Activated CD8-positive, alpha-beta T cell treated with anti-CD3 and anti-CD28 coated beads for 36 hours (primary cell): ENCODE measurements at regions of chr15 and their contacts with region 1.

Region 1: GRCh38 chr15:43824302-43825246 is at the start of gene MFAP1:
- DNase-seq: peak; percentile 95
- ATAC-seq: peak; percentile 84
- H3K4me3 Mint-ChIP-seq: peak within 1 kb of the TSS; percentile 94
- H3K27ac Mint-ChIP-seq: peak within 1 kb of the TSS; percentile 99
- H3K4me1 Mint-ChIP-seq: peaks cover 49% of the 10 kb centered on the region
- H3K27me3 Mint-ChIP-seq: no peaks in the 10 kb centered on the region
- CTCF ChIP-seq: no peak
- total RNA-seq, gene MFAP1: 39.8 to 43.1 TPM

Region 2: DNA sequence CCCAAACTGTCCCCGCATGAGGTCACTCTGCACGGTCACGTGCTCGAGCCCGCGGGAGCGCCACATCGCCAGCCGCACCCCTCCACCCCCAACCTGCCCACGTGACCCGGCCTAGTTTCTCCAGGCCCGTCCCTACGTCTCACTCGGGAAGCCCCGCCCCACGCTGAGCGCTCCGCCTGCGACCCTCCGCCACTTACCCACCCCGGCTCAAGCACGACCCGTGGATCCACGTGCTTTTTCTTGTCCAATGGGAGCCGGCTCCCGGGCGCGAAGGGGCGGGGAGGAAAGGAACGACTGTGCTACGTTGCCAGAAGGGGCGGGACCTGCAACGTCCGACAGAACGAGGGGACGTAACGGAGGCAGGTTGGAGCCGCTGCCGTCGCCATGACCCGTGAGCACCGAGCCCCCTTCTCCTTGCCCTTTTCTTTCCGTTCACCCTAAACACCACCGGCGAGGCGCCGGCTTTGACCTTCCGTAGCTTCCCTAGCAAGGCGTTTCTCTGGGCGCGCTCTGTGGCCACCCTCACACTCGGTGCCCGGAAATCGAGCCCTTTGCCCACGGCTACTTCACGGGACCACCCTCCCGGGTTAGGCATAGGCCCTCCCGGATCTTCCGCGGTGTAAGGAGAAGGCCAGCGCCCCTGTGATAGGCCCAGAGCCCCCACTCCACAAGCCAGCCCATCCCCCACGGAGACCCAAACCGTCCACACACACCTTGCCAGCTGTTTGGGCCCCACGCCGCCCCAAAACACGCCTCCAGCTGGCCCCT is 32.4 kb before region 1 on chr15 and contains the start of gene SERF2:
- CTCF ChIA-PET with region 1: interaction called, 3 read pairs
- POLR2A ChIA-PET with region 1: interaction called, 16 read pairs
- intact Hi-C with region 1: no loop called
- DNase-seq: peak; percentile 100
- ATAC-seq: peak; percentile 97
- H3K4me3 Mint-ChIP-seq: peak within 1 kb of the TSS; percentile 98
- H3K27ac Mint-ChIP-seq: peak within 1 kb of the TSS; percentile 98
- H3K4me1 Mint-ChIP-seq: peaks cover 43% of the 10 kb centered on the region
- H3K27me3 Mint-ChIP-seq: no peaks in the 10 kb centered on the region
- CTCF ChIP-seq: no peak
- total RNA-seq, gene SERF2: 775 to 810 TPM

Region 3: DNA sequence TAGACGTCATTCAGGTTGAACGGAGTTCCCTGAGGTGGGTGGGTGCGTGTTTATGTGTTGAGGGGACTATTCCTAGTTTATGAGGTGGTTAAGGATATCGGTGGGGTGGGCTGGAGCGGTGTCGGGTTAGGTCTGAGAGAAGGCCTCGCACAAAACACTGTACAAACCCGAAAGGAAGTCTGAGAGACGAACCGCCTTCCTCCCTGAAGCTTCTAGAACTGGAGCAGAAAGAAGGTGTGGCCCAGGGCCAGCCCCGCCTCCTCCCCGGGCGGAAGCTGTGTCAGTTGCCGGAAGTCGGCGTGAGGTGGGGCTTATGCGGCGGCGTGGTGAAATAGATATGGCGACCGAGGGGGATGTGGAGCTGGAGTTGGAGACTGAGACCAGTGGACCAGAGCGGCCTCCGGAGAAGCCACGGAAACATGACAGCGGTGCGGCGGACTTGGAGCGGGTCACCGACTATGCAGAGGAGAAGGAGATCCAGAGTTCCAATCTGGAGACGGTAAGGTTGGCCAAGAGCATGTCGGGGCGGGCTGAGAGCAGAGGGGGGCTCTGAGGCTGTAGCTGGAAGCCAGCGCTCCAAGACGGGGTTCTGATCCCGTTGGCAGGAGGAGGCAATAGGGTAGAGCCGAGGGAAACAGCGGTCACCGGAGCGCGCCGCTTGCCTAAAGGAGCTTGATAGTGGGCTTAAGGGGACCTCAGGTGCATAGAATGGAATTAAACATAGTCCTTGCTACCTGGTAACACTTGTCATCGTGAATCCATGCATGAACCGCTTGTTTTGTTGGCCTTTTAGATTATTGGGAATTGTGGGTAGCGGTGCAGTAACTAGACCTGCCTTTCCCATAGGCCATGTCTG is 24.1 kb before region 1 on chr15 and contains the start of gene HYPK:
- CTCF ChIA-PET with region 1: interaction called, 3 read pairs
- POLR2A ChIA-PET with region 1: interaction called, 37 read pairs
- intact Hi-C with region 1: no loop called
- DNase-seq: peak; percentile 95
- ATAC-seq: peak; percentile 98
- H3K4me3 Mint-ChIP-seq: peak within 1 kb of the TSS; percentile 93
- H3K27ac Mint-ChIP-seq: peak within 1 kb of the TSS; percentile 99
- H3K4me1 Mint-ChIP-seq: peaks cover 43% of the 10 kb centered on the region
- H3K27me3 Mint-ChIP-seq: no peaks in the 10 kb centered on the region
- CTCF ChIP-seq: no peak
- total RNA-seq, gene HYPK: 15.5 to 16.1 TPM

Region 4: DNA sequence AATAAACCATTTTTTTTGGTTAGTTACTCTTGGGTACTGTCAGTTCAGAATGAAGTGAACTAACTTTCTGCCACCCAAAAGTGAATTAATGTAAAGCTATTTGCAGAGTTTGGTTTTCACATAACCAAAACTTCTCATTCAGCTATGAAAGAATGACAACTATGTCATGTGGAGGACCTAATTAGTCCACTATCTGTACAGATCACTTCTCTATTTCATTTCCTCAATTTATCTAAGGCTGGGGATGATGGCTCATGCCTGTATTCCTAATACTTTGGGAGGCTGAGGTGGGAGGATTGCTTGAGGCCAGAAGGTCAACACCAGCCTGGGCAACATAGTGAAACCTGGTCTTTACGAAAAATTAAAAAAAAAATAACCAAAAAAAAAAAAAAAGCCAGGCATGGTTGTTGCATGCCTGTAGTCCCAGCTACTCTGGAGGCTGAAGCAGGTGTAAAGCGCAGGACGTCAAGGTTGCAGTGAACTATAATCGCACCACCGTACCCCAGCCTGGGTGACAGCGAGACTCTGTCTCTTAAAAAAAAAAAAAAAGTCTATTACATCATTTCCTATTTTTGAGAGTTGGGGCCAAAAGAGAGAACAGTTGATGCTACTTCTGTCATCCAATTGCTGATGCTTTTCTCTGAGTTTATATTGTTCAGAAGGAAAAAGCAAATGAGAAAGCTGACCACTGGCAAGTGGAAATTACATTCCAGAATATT is 15.5 kb before region 1 on chr15:
- CTCF ChIA-PET with region 1: interaction called, 3 read pairs
- POLR2A ChIA-PET with region 1: interaction called, 11 read pairs
- intact Hi-C with region 1: no loop called
- DNase-seq: no peak
- ATAC-seq: no peak
- H3K4me3 Mint-ChIP-seq: no peak overlapping the region
- H3K27ac Mint-ChIP-seq: peak overlapping the region; percentile 81
- H3K4me1 Mint-ChIP-seq: peaks cover 10% of the 10 kb centered on the region
- H3K27me3 Mint-ChIP-seq: no peaks in the 10 kb centered on the region
- CTCF ChIP-seq: no peak

Region 5: GRCh38 chr15:44147636-44148035 is 323.1 kb after region 1 on chr15:
- CTCF ChIA-PET with region 1: no interaction called
- POLR2A ChIA-PET with region 1: no interaction called
- intact Hi-C with region 1: no loop called
- DNase-seq: no peak
- ATAC-seq: no peak
- H3K4me3 Mint-ChIP-seq: no peak overlapping the region
- H3K27ac Mint-ChIP-seq: no peak overlapping the region
- H3K4me1 Mint-ChIP-seq: no peaks in the 10 kb centered on the region
- H3K27me3 Mint-ChIP-seq: peaks cover 14% of the 10 kb centered on the region
- CTCF ChIP-seq: no peak